Cardiac septum (tissue), 1 donor: ENCODE measurements at regions of chr7 and their contacts with region 1.

Region 1: DNA sequence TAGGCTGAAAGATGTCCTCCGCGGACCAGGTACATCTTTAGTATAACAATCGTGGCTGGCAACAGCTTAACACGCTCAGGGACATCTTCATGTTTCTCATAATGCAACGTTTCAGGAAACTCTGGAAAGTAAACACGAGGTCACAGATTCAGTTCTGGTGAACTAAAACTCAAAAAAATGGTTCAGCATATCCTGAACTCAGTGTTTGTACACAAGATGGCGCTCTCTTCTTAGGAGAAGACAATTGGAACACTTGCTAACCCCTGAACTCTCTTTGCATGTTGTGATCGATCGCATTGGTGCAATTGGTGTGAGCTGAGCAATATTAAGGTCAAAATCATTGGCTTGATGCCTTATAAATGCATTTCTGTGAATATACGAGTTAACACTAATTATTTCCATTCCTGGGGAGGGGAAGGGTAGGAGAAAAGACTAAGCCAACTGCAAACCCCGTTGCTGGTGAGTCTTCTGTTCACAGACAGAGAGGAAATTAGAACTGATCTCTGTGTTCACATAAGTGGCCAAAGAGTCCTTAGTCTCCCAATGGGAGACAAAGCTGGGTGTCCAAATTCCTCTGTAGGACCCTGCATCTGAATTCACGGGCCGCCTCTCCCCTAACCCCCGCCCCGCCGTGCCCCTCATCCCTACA is 52.6 kb upstream of the FAM180A start:
- DNase-seq: no peak

Region 2: GRCh38 chr7:135291809-135292253 is 509.3 kb before region 1 on chr7:
- intact Hi-C with region 1: no loop called
- DNase-seq: no peak

Region 3: GRCh38 chr7:135684136-135684535 is 117.0 kb before region 1 on chr7:
- intact Hi-C with region 1: no loop called
- DNase-seq: peak; percentile 55

Region 4: GRCh38 chr7:135728136-135728669 is 73.0 kb before region 1 on chr7 and contains the start of gene SLC13A4:
- intact Hi-C with region 1: no loop called
- DNase-seq: no peak
- total RNA-seq, gene SLC13A4: 1.0 TPM

Region 5: DNA sequence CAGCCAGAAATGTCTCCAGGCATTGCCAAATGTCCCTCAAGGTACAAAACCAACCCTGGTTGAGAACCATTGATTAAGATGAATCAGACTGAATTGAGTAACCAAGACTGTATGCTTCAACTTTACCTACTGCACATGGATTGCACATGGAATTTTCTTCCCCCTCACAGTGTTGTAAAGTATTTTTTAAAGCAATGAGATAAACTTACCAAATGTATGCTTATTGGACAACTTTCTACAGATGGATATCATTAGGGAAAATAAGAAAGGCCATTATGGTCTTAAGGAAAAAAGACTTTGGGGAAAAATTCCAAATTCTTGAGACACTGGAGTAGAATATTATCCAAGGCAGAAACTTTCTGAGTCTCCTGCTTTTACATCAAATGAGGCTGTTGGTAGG is 196.9 kb after region 1 on chr7:
- intact Hi-C with region 1: no loop called
- DNase-seq: no peak

Region 6: GRCh38 chr7:136009488-136010079 is 208.4 kb after region 1 on chr7:
- intact Hi-C with region 1: loop called (anchors 1 kb)
- DNase-seq: no peak